Heart left ventricle (tissue), 16 donors: ENCODE measurements at regions of chr16 and their contacts with region 1.

Region 1: DNA sequence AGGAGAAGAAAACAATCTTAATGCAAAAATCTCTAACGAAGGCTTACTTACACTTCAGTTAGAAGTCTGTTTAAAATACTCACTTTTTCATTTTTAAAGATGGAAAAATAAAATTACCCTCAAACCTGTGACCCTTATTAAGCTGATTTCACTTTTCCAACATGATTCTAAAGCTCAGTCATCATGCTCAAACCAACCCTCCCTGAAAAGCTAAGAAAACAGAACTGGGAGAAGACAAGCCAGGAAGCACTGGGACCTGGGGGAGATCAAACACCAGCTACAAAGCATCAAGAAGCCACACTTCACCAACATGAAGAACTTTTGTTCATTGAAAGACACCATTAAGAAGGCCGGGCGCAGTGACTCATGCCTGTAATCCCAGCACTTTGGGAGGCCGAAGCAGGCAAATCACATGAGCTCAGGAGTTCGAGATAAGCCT is 88.8 kb downstream of the LITAF start:
- DNase-seq: no peak
- ATAC-seq: peak in 1 of 4 donors; percentile 5
- H3K4me3 ChIP-seq: no peak overlapping the region
- H3K27ac ChIP-seq: peak overlapping the region; percentile 31 to 84 (median 80)
- H3K4me1 ChIP-seq: peaks cover 0 to 39% (median 25%) of the 10 kb centered on the region in 12 donors
- H3K27me3 ChIP-seq: no peaks in the 10 kb centered on the region
- CTCF ChIP-seq: no peak
- POLR2A ChIP-seq: no peak

Region 2: DNA sequence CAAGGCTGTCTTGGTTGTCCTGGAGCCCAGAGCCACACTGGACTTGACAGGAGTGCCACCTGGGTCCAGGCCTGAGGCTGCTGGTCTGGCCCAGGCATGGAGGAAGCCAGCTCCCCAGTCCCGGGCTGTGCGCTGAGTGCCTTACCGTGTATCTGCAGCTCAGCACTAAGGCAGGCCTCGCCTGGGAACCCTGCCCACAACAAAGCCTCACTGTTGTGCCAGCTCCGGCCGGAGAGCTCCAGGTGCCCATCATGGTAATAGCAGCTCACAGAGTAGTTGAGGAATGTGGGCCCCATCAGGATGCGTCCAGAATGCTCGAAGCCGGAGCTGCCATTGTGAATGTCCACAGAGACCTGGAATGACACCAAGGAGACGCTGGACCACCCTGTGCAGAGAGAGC is 80.4 kb before region 1 on chr16:
- intact Hi-C with region 1: loop called in 1 of 10 experiments (anchors 5 kb)
- DNase-seq: peak; percentile 33 to 79 (median 77)
- ATAC-seq: peak; percentile 82 to 96 (median 95)
- H3K4me3 ChIP-seq: no peak overlapping the region
- H3K27ac ChIP-seq: peak overlapping the region in 2 of 12 donors; percentile 4 to 53
- H3K4me1 ChIP-seq: no peaks in the 10 kb centered on the region
- H3K27me3 ChIP-seq: no peaks in the 10 kb centered on the region
- CTCF ChIP-seq: no peak
- POLR2A ChIP-seq: no peak

Region 3: GRCh38 chr16:11452746-11453389 is 45.0 kb before region 1 on chr16:
- intact Hi-C with region 1: no loop called
- DNase-seq: no peak
- ATAC-seq: no peak
- H3K4me3 ChIP-seq: no peak overlapping the region
- H3K27ac ChIP-seq: peak overlapping the region in 4 of 12 donors; percentile 23 to 53 (median 44)
- H3K4me1 ChIP-seq: peaks cover 0 to 7% (median 0%) of the 10 kb centered on the region in 12 donors
- H3K27me3 ChIP-seq: no peaks in the 10 kb centered on the region
- CTCF ChIP-seq: no peak
- POLR2A ChIP-seq: no peak